Breast epithelium (tissue), 4 donors: ENCODE measurements at regions of chr16 and their contacts with region 1.

Region 1: GRCh38 chr16:48409839-48410611 is 24.8 kb upstream of the SIAH1 start:
- DNase-seq: peak in 1 of 2 donors; percentile 24
- H3K4me3 ChIP-seq: no peak overlapping the region
- H3K27ac ChIP-seq: peak overlapping the region; percentile 58 to 64
- H3K4me1 ChIP-seq: no peaks in the 10 kb centered on the region
- H3K27me3 ChIP-seq: no peaks in the 10 kb centered on the region
- CTCF ChIP-seq: no peak
- POLR2A ChIP-seq: no peak

Region 2: DNA sequence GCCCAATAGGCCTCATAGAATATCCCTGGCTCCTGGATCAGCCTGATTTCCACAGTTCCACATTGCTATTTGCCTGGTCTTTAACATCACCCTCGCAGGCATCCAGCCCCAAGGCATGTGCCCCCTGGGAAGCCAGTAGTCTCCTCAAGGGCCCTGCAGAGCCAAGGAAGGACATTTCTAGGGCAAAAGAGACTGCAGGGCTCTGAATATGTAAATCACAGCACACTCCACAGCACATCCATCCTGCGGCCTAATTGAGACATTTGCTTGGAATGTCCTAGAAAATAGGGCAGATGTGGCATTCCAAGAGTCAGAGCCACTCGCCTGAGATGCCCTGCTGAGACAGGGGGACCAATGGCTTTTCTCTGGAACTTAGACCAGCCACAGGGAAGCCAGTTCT is 952.2 kb after region 1 on chr16:
- intact Hi-C with region 1: loop called (anchors 5 kb)
- DNase-seq: no peak
- H3K4me3 ChIP-seq: no peak overlapping the region
- H3K27ac ChIP-seq: no peak overlapping the region
- H3K4me1 ChIP-seq: no peaks in the 10 kb centered on the region
- H3K27me3 ChIP-seq: no peaks in the 10 kb centered on the region
- CTCF ChIP-seq: no peak
- POLR2A ChIP-seq: no peak